Vagina (tissue), 2 donors: ENCODE measurements at regions of chr2 and their contacts with region 1.

Region 1: DNA sequence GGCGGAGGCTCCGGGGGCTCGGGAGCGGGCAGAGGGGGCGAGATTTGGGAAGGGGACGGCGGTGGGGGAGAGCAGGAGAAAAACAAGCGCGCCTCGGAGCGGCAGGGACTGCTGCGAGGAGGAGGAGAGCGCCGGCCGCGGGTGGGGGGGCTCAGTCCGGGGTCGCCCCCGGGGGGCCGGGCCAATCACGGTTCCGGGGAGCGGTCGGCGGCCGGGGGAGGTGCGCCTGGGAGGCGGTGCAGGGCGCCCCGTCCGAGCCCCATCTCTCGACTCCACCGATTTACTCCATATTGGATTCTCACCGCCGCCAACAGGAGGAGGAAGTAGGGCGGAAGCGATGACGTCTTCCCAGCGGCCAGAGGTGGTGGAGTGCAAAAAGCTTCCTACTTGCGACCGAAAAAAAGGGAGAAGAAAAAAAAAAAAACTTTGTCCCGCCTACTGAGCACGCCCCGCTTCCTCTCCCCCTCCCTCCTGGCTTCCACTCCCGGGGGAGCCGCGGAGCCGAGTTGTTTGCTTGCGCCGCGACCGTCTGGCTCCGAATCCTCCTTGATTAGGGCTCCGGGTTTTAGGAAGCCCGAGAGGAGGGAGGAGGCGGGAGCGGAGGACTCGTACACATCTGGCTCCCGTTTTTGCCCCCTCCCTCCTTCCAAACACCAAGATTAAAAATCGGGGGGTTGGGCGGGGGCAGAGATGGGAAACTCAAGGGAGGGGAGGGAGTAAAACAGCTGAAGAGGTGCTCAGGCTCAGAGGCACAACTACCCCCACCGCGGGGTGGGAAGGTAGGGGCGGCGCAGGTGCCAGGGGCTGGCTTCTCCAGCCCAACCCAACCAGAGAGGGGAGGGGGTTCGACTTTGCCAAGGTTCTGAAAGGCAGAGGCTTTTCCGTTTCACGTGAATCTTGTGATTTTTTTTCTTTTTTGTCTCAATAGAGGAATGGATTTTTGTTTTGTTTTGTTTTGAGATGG is at the start of gene SPRED2:
- DNase-seq: peak; percentile 94 to 98
- H3K4me3 ChIP-seq: peak within 1 kb of the TSS; percentile 73 to 91
- H3K27ac ChIP-seq: peak within 1 kb of the TSS; percentile 94
- H3K4me1 ChIP-seq: peaks cover 32% of the 10 kb centered on the region
- H3K27me3 ChIP-seq: no peaks in the 10 kb centered on the region
- CTCF ChIP-seq: peak in 1 of 3 experiments; percentile 12
- POLR2A ChIP-seq: peak in 1 of 2 donors; percentile 57
- total RNA-seq, gene SPRED2: 18.4 TPM

Region 2: DNA sequence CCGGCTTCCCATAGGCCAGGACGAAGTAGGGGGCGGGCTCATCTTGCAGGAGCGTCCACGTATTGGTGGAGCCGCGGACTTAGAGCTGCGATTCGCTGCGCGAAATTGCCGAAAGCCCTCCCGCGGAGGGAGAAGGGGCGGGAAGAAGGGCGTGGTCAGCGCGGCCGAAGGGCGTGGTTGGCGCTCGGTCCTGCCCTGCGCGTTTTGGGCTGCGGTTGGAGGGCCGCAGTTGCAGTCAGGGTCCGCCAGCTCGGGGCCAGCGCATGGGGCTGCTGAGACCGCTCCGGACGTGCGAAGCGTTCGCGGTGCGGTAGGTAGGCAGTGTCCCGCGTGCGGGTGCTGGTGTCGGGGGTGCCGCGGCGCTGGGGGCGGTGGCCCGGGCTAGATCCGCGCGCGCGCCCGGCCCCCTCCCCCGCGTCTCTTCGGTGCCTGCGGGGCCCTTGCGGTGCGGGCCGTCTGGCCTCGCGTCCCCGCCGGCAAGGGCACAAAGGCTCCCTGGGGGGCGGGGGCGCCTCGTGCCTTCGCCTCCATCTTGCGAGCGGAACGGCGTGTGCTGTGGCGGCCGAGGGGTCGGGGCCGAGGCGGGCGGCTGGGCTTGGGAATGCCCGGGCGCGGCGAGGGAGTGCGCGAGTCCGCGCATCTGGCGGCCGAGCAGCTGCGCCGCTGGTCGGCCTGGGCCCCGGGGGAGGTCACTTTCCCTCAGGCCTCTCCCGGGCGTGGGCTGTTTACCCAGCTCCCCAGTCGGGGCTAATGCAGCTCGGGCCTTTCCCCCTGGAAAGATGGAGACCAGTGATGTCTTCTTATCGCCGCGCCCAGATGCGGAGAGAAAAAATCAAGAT is 376.1 kb before region 1 on chr2 and contains the start of gene CEP68:
- intact Hi-C with region 1: loop called (anchors 10 kb)
- DNase-seq: peak in 1 of 2 donors; percentile 99
- H3K4me3 ChIP-seq: peak within 1 kb of the TSS; percentile 65 to 82
- H3K27ac ChIP-seq: peak within 1 kb of the TSS; percentile 94
- H3K4me1 ChIP-seq: peaks cover 53% of the 10 kb centered on the region
- H3K27me3 ChIP-seq: no peaks in the 10 kb centered on the region
- CTCF ChIP-seq: no peak
- POLR2A ChIP-seq: peak; percentile 91 to 92
- total RNA-seq, gene CEP68: 25.0 TPM

Region 3: DNA sequence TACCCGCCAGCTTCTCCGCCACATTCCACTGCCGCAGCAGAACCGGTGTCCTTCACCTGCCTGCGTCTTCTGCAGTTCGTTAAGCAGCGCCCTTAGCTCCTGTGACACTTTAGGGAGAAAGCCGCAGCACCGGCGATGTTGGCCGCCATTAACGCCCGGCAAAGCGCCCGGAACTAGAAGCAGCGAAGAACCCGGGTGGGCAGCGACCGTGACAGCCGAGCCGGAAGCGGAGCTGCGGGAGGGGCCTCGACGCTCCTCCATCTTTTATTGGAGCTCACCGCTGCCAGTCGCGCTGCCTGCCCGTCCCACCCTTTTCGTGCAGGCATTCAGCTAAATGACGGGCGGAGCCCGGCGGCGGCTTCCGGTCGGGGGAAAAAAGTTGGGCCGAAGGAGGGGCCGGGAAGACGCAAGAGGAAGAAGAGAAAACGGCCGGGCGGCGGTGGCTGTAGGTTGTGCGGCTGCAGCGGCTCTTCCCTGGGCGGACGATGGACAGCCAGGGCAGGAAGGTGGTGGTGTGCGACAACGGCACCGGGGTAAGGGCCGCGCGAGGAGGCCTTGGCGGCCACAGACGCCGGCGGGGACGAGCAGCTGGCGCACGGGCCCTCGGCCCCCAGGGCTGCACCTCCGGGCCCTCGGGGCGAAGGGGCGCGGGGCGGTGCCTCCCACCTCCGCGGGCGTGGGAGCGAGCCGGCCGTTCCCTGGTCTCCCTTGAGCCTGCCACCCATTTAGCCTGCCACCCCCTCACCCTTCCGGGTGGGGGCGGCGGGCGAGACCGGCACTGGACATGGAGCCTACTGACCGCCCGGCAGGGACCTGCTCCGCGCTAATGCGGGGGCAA is 204.9 kb before region 1 on chr2 and contains the start of gene ACTR2:
- intact Hi-C with region 1: loop called (anchors 5 kb)
- DNase-seq: peak; percentile 95 to 96
- H3K4me3 ChIP-seq: peak within 1 kb of the TSS; percentile 84 to 97
- H3K27ac ChIP-seq: peak within 1 kb of the TSS; percentile 92
- H3K4me1 ChIP-seq: peaks cover 50% of the 10 kb centered on the region
- H3K27me3 ChIP-seq: no peaks in the 10 kb centered on the region
- CTCF ChIP-seq: no peak
- POLR2A ChIP-seq: peak in 1 of 2 donors; percentile 57
- total RNA-seq, gene ACTR2: 70.0 TPM

Region 4: DNA sequence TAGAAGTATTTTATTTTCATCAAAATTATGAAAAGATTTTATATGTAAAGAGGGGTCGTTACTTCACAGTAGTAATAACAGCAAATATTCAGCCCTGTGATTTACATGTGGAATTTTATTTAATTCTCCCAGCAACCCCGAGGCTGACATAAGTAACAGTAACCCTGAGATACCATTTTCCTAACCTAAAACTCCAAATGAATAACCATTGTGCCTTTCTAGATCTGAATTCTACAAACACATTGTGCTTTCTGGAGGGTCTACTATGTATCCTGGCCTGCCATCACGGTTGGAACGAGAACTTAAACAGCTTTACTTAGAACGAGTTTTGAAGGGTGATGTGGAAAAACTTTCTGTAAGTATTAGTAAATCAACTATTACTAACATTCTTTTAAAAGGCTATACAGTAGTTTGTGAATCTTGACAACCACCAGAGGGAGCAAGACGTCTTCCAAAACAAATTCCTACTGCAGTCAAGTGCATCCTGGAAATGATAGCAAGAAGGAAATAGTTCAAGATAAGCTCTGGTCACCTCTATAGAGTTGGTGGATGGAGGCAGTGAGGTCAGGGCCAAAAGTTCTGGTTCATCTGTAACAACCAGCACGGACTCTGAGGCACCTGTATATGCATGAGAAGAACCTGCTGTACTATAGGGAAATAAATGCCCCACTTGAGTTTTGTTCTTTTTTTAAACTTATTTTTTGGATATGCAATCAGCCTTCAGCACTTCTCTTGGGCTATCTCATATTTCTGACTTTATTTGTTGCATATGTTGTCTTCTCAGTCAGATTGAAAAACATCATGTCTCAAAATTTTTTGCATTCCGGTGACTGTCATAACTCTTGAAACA is 167.5 kb before region 1 on chr2:
- intact Hi-C with region 1: loop called (anchors 10 kb)
- DNase-seq: no peak
- H3K4me3 ChIP-seq: no peak overlapping the region
- H3K27ac ChIP-seq: no peak overlapping the region
- H3K4me1 ChIP-seq: peaks cover 7% of the 10 kb centered on the region
- H3K27me3 ChIP-seq: no peaks in the 10 kb centered on the region
- CTCF ChIP-seq: peak; percentile 60 to 75 (median 67)
- POLR2A ChIP-seq: no peak

Region 5: GRCh38 chr2:65300761-65301711 is 131.5 kb before region 1 on chr2:
- intact Hi-C with region 1: loop called (anchors 2 kb)
- DNase-seq: no peak
- H3K4me3 ChIP-seq: peak overlapping the region; percentile 11
- H3K27ac ChIP-seq: peak overlapping the region; percentile 53
- H3K4me1 ChIP-seq: peaks cover 37% of the 10 kb centered on the region
- H3K27me3 ChIP-seq: no peaks in the 10 kb centered on the region
- CTCF ChIP-seq: no peak
- POLR2A ChIP-seq: no peak

Region 6: DNA sequence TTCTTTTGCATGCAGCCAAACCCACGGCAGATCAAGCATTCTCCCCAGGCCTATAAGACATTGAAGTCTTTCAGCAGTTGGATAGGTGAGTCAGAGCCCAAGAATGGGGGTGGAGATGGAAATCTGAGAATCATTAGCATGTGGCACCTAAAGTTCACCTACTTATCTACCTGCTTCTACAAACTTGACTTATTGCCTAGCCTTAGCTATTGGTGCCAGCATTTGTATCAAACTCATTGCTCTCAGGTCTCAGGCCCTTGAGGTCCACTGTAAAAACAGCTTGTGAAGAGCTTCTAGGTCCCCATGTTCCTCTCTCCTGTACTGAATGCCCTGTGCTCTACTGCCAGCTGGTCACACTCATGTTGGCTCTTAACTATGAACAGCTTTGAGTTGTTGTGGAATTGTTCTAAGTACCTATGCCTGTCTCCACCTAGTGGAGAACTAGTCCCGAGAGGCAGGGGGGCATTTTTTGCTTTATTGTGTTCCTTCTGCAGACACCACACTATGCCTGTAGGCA is 278.3 kb after region 1 on chr2:
- intact Hi-C with region 1: no loop called
- DNase-seq: no peak
- H3K4me3 ChIP-seq: no peak overlapping the region
- H3K27ac ChIP-seq: no peak overlapping the region
- H3K4me1 ChIP-seq: no peaks in the 10 kb centered on the region
- H3K27me3 ChIP-seq: no peaks in the 10 kb centered on the region
- CTCF ChIP-seq: no peak
- POLR2A ChIP-seq: no peak